ENCODE measurements at regions of chr11 and their contacts with region 1.

Region 1: GRCh38 chr11:65888163-65888814 is at the start of gene FIBP:
- DNase-seq: peak; percentile 90 to 97 (median 91)
- H3K4me3 ChIP-seq: peak within 1 kb of the TSS; percentile 79 to 83
- H3K4me3 Mint-ChIP-seq: peak within 1 kb of the TSS; percentile 86 to 97 (median 91)
- H3K27ac ChIP-seq: peak within 1 kb of the TSS; percentile 86
- H3K27ac Mint-ChIP-seq: peak within 1 kb of the TSS; percentile 95 to 100 (median 99)
- H3K4me1 ChIP-seq: peaks cover 63% of the 10 kb centered on the region
- H3K4me1 Mint-ChIP-seq: peaks cover 34 to 73% (median 56%) of the 10 kb centered on the region in 4 donors
- H3K27me3 ChIP-seq: no peaks in the 10 kb centered on the region
- H3K27me3 Mint-ChIP-seq: no peaks in the 10 kb centered on the region
- total RNA-seq, gene FIBP: 39.9 to 42.1 TPM

Region 2: DNA sequence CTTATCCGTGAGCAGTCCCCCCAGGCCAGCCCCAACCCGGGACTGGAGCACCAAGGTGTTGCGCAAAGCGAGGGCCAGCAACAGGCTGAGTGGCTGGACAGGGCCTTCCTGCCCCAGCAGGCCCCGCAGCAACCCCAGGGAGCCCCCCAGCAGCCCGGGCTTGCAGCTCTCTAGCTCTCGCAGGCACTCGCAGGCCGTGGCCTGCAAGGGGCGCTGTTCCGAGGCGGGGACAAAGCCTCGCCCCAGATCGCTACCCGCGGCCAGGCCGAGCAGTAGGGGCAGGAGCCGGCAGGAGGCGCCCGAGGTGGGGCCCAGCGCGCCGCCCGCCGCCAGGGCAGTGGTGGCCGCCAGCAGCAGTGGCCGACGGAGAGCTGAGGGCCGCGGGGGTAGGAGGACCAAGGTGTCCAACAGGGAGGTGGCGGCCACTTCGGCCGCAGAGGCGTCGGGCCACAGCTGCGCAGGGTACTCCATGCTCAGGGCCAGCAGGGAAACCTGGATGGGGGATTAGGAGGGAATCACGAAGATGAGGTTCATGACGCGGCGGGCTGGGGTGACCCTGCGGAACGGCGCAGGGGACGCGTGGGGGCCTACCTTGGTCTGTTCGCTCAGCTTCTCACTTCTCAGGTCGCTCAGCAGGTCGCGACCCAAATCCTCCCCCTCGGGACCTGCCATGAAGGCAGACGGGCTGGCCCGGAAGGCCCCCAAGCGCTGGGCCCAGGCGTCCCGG is 108.3 kb before region 1 on chr11:
- CTCF ChIA-PET with region 1: interaction called, 11 read pairs
- POLR2A ChIA-PET with region 1: interaction called, 11 read pairs
- intact Hi-C with region 1: no loop called
- DNase-seq: peak; percentile 74 to 79 (median 77)
- H3K4me3 ChIP-seq: peak overlapping the region; percentile 54 to 65
- H3K4me3 Mint-ChIP-seq: peak overlapping the region; percentile 74 to 89 (median 84)
- H3K27ac ChIP-seq: peak overlapping the region; percentile 62
- H3K27ac Mint-ChIP-seq: peak overlapping the region in 6 of 7 donors; percentile 49 to 74 (median 72)
- H3K4me1 ChIP-seq: peaks cover 18% of the 10 kb centered on the region
- H3K4me1 Mint-ChIP-seq: peaks cover 5 to 20% (median 13%) of the 10 kb centered on the region in 4 donors
- H3K27me3 ChIP-seq: no peaks in the 10 kb centered on the region
- H3K27me3 Mint-ChIP-seq: no peaks in the 10 kb centered on the region

Region 3: DNA sequence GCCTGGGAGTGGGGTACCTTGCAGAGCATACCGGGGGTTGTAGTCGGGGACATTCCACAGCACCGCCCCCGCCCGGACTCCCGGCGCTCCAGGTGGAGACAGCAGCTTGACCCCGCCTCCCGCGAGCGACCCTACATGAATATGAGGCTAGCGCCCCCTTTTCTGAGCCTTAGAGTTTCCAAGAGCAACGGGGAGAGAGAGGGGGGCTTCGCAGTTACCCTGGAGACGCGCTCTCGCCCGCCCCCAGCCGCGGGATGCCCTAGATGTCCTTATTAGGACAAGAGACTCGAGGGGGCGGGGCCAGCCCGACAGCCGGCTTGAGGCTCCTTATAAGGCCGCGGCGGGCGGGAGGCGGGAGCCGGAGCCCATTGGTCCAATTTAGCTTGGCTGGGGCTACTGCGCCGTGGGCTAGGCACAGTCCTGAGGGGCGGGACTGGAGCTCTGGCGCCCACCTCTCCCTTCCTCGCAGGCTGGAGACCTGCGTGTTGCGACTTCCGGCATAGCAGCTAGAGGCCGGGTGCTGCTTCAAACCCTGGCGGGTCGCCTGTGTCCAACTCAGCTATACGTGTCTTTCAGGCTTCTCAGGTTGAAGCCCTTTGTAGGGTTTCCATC is 29.0 kb before region 1 on chr11:
- CTCF ChIA-PET with region 1: interaction called, 281 read pairs
- POLR2A ChIA-PET with region 1: interaction called, 435 read pairs
- intact Hi-C with region 1: loop called (anchors 1 kb)
- DNase-seq: peak; percentile 89 to 98 (median 92)
- H3K4me3 ChIP-seq: peak overlapping the region; percentile 55 to 81
- H3K4me3 Mint-ChIP-seq: peak overlapping the region; percentile 93 to 99 (median 96)
- H3K27ac ChIP-seq: peak overlapping the region; percentile 85
- H3K27ac Mint-ChIP-seq: peak overlapping the region; percentile 92 to 99 (median 97)
- H3K4me1 ChIP-seq: peaks cover 58% of the 10 kb centered on the region
- H3K4me1 Mint-ChIP-seq: peaks cover 32 to 64% (median 48%) of the 10 kb centered on the region in 4 donors
- H3K27me3 ChIP-seq: no peaks in the 10 kb centered on the region
- H3K27me3 Mint-ChIP-seq: no peaks in the 10 kb centered on the region

Region 4: GRCh38 chr11:65900125-65900898 is 12.0 kb after region 1 on chr11 and contains the start of gene FOSL1:
- CTCF ChIA-PET with region 1: interaction called, 162 read pairs
- POLR2A ChIA-PET with region 1: interaction called, 97 read pairs
- intact Hi-C with region 1: loop called (anchors 1 kb)
- DNase-seq: peak; percentile 91 to 98 (median 92)
- H3K4me3 ChIP-seq: peak within 1 kb of the TSS; percentile 17 to 51
- H3K4me3 Mint-ChIP-seq: peak within 1 kb of the TSS; percentile 57 to 84 (median 65)
- H3K27ac ChIP-seq: peak within 1 kb of the TSS; percentile 46
- H3K27ac Mint-ChIP-seq: peak within 1 kb of the TSS; percentile 69 to 93 (median 88)
- H3K4me1 ChIP-seq: peaks cover 21% of the 10 kb centered on the region
- H3K4me1 Mint-ChIP-seq: peaks cover 5 to 28% (median 7%) of the 10 kb centered on the region in 4 donors
- H3K27me3 ChIP-seq: peaks cover 4% of the 10 kb centered on the region
- H3K27me3 Mint-ChIP-seq: peaks cover 0 to 1% of the 10 kb centered on the region in 2 donors
- total RNA-seq, gene FOSL1: 0.39 to 0.79 TPM

Region 5: GRCh38 chr11:65919146-65920033 is 31.1 kb after region 1 on chr11 and contains the start of gene DRAP1:
- CTCF ChIA-PET with region 1: interaction called, 25 read pairs
- POLR2A ChIA-PET with region 1: interaction called, 320 read pairs
- intact Hi-C with region 1: loop called (anchors 1 kb)
- DNase-seq: peak; percentile 97 to 99 (median 98)
- H3K4me3 ChIP-seq: peak within 1 kb of the TSS; percentile 76 to 89
- H3K4me3 Mint-ChIP-seq: peak within 1 kb of the TSS; percentile 89 to 95 (median 92)
- H3K27ac ChIP-seq: peak within 1 kb of the TSS; percentile 86
- H3K27ac Mint-ChIP-seq: peak within 1 kb of the TSS; percentile 89 to 95 (median 93)
- H3K4me1 ChIP-seq: peaks cover 52% of the 10 kb centered on the region
- H3K4me1 Mint-ChIP-seq: peaks cover 15 to 63% (median 39%) of the 10 kb centered on the region in 4 donors
- H3K27me3 ChIP-seq: no peaks in the 10 kb centered on the region
- H3K27me3 Mint-ChIP-seq: no peaks in the 10 kb centered on the region
- total RNA-seq, gene DRAP1: 78.2 to 78.7 TPM

Region 6: GRCh38 chr11:65961232-65961901 is 73.1 kb after region 1 on chr11 and contains the start of gene SART1:
- CTCF ChIA-PET with region 1: interaction called, 86 read pairs
- POLR2A ChIA-PET with region 1: interaction called, 103 read pairs
- intact Hi-C with region 1: loop called (anchors 1 kb)
- DNase-seq: peak; percentile 92 to 98 (median 95)
- H3K4me3 ChIP-seq: peak within 1 kb of the TSS; percentile 70 to 79
- H3K4me3 Mint-ChIP-seq: peak within 1 kb of the TSS; percentile 98 to 99 (median 98)
- H3K27ac ChIP-seq: peak within 1 kb of the TSS; percentile 96
- H3K27ac Mint-ChIP-seq: peak within 1 kb of the TSS; percentile 92 to 100 (median 99)
- H3K4me1 ChIP-seq: peaks cover 42% of the 10 kb centered on the region
- H3K4me1 Mint-ChIP-seq: peaks cover 31 to 61% (median 39%) of the 10 kb centered on the region in 4 donors
- H3K27me3 ChIP-seq: no peaks in the 10 kb centered on the region
- H3K27me3 Mint-ChIP-seq: no peaks in the 10 kb centered on the region
- total RNA-seq, gene SART1: 83.9 to 90.6 TPM

Region 7: DNA sequence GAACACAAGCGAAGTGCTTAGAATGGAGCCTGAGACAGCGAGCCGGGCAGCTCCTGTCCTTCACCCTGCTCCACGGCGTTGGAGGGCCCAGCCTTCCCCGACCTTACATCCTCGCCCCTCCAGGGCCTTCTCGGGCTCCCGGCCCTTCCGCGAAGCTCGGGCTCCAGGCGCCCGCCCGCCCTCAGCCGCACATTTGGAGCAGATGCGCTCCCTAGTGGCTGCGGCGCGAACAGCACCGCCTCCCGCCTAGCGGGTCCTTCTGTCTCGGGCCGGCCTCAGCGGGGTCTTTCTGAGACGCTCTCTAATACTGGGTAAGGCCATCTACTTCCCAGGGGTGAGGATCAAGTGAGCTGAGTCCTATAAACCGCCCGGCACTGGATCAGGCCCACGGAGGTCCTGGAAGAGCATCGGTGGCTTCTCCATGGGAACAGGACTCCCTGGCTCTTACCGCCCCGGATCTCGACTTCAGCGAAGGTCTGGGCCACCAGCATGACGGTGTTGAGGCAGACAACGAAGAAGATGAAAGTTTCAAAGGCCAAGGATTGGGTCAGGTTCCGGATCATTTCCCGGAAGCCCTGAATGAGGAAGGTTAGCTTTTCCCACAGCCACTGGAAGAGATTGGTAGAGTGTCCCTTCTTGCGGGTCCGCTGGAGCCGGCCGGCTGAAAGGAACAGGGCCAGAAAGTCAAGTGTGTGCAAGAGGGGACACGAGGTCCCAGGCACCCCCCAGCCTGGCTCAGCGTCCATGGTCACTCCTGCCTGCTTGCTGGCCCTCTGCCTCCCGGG is 134.3 kb after region 1 on chr11:
- CTCF ChIA-PET with region 1: interaction called, 10 read pairs
- POLR2A ChIA-PET with region 1: interaction called, 4 read pairs
- intact Hi-C with region 1: no loop called
- DNase-seq: peak; percentile 59 to 76 (median 63)
- H3K4me3 ChIP-seq: no peak overlapping the region
- H3K4me3 Mint-ChIP-seq: peak overlapping the region in 4 of 8 donors; percentile 33 to 72 (median 56)
- H3K27ac ChIP-seq: no peak overlapping the region
- H3K27ac Mint-ChIP-seq: peak overlapping the region in 1 of 7 donors; percentile 48
- H3K4me1 ChIP-seq: peaks cover 6% of the 10 kb centered on the region
- H3K4me1 Mint-ChIP-seq: peaks cover 0 to 9% (median 6%) of the 10 kb centered on the region in 4 donors
- H3K27me3 ChIP-seq: no peaks in the 10 kb centered on the region
- H3K27me3 Mint-ChIP-seq: peaks cover 4 to 6% of the 10 kb centered on the region in 2 donors

Region 8: DNA sequence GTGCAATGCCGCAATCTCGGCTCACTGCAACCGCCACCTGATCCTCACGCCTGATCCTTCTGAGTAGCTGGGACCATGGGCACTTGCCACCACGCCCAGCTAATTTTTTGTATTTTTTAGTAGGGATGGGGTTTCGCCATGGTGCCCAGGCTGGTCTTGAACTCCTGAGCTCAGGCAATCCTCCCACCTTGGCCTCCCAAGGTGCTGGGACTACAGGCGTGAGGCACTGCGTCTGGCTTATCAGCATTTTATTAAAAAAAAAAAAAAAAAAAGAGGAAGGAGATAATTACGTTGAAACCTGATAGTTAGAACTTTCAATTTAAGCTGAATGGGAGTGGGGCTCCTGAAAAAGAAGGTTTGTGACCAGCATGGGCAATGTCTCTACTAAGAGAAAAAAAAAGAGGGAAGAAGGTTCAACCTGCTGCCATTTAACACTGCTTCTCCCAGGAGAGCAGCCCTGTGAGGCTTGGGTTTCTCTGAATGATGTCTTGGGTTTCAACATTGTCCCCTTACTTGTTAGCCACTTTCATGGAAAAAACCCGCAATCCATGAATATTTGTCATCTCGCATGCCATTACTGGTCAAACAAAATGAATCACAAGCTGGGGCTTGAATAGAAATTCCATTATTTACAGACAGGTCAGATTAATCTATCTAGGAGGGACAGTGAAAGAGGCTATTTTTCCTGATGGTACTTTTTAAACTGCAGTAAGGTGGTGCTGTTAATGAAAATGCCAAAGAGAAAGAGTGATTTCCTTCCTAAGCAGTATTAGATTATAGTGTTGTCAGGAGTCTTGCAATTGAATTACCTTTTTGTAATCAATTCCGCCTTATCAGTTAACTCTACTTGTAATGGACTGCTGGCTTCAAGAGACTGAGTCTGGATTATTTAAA is 254.3 kb after region 1 on chr11:
- CTCF ChIA-PET with region 1: no interaction called
- POLR2A ChIA-PET with region 1: no interaction called
- intact Hi-C with region 1: no loop called
- DNase-seq: no peak
- H3K4me3 ChIP-seq: no peak overlapping the region
- H3K4me3 Mint-ChIP-seq: no peak overlapping the region
- H3K27ac ChIP-seq: no peak overlapping the region
- H3K27ac Mint-ChIP-seq: no peak overlapping the region
- H3K4me1 ChIP-seq: peaks cover 43% of the 10 kb centered on the region
- H3K4me1 Mint-ChIP-seq: peaks cover 24 to 60% (median 48%) of the 10 kb centered on the region in 4 donors
- H3K27me3 ChIP-seq: no peaks in the 10 kb centered on the region
- H3K27me3 Mint-ChIP-seq: no peaks in the 10 kb centered on the region

Measured in CD4-positive, alpha-beta memory T cell (primary cell).